PC-9 (cell line): ENCODE measurements at regions of chrX and their contacts with region 1.

Region 1: DNA sequence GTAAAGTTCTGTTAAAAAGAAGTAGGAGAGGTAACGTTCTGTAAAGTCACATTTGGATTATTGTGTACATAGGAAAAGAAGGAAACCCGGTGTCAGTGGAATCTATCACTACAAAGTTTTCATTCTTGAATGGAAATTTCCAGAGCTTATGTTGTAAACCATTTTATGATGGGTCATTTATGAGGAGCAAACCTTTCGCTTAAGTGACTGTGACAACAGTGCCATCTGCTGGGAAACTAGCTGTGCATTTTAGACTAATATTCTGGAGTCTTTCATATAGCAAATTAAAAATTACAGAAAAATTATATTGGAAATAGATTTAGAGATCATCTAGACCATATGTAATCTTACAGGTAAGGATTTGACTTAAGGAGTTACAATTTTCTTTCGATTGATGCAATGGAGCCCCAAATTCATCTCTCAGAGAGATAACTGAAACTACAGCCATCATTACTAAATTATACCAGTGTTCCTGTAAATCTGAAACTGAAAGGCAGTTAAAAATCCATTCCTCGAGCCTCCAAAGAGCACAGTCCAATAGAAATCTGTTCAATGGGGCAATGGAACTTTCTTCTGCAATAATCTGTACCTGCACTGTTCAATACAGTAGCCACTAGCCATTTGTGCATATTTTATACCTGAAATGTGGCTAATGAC is 26.9 kb downstream of the ASB9 start:
- DNase-seq: peak; percentile 9 to 40
- H3K4me3 ChIP-seq: no peak overlapping the region
- H3K27ac ChIP-seq: no peak overlapping the region
- H3K4me1 ChIP-seq: no peaks in the 10 kb centered on the region
- H3K27me3 ChIP-seq: no peaks in the 10 kb centered on the region
- CTCF ChIP-seq: peak; percentile 68

Region 2: GRCh38 chrX:14039344-14039743 is 1203.7 kb before region 1 on chrX:
- CTCF ChIA-PET with region 1: interaction called, 3 read pairs
- POLR2A ChIA-PET with region 1: no interaction called
- intact Hi-C with region 1: loop called (anchors 2 kb)
- DNase-seq: peak; percentile 18 to 41
- H3K4me3 ChIP-seq: no peak overlapping the region
- H3K27ac ChIP-seq: no peak overlapping the region
- H3K4me1 ChIP-seq: no peaks in the 10 kb centered on the region
- H3K27me3 ChIP-seq: no peaks in the 10 kb centered on the region
- CTCF ChIP-seq: peak; percentile 80

Region 3: GRCh38 chrX:14440106-14440505 is 802.9 kb before region 1 on chrX:
- CTCF ChIA-PET with region 1: no interaction called
- POLR2A ChIA-PET with region 1: no interaction called
- intact Hi-C with region 1: no loop called
- DNase-seq: no peak
- H3K4me3 ChIP-seq: no peak overlapping the region
- H3K27ac ChIP-seq: no peak overlapping the region
- H3K4me1 ChIP-seq: no peaks in the 10 kb centered on the region
- H3K27me3 ChIP-seq: no peaks in the 10 kb centered on the region
- CTCF ChIP-seq: no peak